ENCODE measurements at regions of chr17 and their contacts with region 1.

Region 1: DNA sequence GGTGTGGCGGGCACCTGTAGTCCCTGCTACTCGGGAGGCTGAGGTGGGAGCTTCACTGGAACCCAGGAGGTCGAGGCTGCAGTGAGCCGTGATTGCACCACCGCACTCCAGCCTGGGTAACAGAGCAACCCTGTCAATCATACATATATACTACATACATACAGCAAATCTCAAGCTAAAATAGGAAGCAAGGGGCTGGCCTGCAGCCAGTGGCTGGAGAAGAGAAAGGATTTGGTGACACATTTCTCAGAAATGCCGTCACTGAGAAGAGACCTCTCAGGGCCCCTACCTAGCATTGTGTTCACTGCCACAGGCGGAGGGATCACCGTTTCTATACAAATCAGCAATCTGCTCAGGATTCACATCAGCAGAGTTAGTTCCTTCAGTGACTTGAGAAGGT is 16.9 kb downstream of the NARF start:
- DNase-seq: no peak
- H3K4me3 ChIP-seq: no peak overlapping the region
- H3K4me3 Mint-ChIP-seq: no peak overlapping the region
- H3K27ac Mint-ChIP-seq: no peak overlapping the region
- H3K4me1 ChIP-seq: no peaks in the 10 kb centered on the region
- H3K4me1 Mint-ChIP-seq: no peaks in the 10 kb centered on the region
- H3K27me3 ChIP-seq: no peaks in the 10 kb centered on the region
- H3K27me3 Mint-ChIP-seq: no peaks in the 10 kb centered on the region
- CTCF ChIP-seq: no peak

Region 2: DNA sequence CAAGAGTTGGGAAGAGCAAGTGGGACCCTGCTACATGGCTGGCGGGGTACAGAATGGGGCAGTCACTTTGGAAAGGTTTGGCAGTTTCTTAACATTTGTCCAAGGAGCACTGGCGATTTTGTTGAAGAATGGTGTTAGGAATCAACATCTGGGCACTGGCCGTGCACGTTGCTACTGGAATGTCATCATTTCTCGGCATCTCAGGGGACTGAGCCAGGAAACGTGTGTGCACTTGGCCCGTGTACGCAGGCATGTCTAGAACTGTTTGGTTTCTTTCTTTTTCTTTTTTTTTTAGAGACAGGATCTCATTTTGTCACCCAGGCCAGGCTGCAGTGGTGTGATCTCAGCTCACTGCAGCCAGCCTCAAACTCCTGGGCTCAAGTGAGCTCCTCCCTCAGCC is 26.7 kb after region 1 on chr17:
- CTCF ChIA-PET with region 1: no interaction called
- POLR2A ChIA-PET with region 1: no interaction called
- intact Hi-C with region 1: no loop called
- DNase-seq: no peak
- H3K4me3 ChIP-seq: no peak overlapping the region
- H3K4me3 Mint-ChIP-seq: no peak overlapping the region
- H3K27ac Mint-ChIP-seq: no peak overlapping the region
- H3K4me1 ChIP-seq: no peaks in the 10 kb centered on the region
- H3K4me1 Mint-ChIP-seq: no peaks in the 10 kb centered on the region
- H3K27me3 ChIP-seq: no peaks in the 10 kb centered on the region
- H3K27me3 Mint-ChIP-seq: no peaks in the 10 kb centered on the region
- CTCF ChIP-seq: no peak

Region 3: DNA sequence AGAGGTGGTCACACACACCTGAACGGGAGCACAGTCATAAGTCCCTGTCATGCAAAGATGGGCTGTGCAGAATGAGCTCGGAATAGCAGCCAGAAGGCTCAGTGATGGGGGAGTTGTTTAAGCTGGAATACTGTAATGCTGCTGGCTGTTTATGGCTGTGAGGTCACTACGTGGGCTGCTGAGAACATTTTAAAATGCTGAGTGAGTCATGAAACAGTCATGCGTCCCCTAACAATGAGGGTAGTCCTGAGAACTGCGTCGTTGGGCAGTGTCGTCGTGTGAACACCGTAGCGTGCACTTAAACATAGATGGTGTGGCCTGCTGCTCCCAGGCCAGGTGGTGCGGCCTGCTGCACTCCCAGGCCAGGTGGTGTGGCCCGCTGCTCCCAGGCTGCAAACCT is 316.1 kb after region 1 on chr17:
- CTCF ChIA-PET with region 1: no interaction called
- POLR2A ChIA-PET with region 1: no interaction called
- intact Hi-C with region 1: loop called (anchors 10 kb)
- DNase-seq: no peak
- H3K4me3 ChIP-seq: no peak overlapping the region
- H3K4me3 Mint-ChIP-seq: no peak overlapping the region
- H3K27ac Mint-ChIP-seq: no peak overlapping the region
- H3K4me1 ChIP-seq: no peaks in the 10 kb centered on the region
- H3K4me1 Mint-ChIP-seq: no peaks in the 10 kb centered on the region
- H3K27me3 ChIP-seq: no peaks in the 10 kb centered on the region
- H3K27me3 Mint-ChIP-seq: no peaks in the 10 kb centered on the region
- CTCF ChIP-seq: no peak

Measured in Caco-2 (cell line).